Thyroid gland (tissue), 4 donors: ENCODE measurements at regions of chr1 and their contacts with region 1.

Region 1: DNA sequence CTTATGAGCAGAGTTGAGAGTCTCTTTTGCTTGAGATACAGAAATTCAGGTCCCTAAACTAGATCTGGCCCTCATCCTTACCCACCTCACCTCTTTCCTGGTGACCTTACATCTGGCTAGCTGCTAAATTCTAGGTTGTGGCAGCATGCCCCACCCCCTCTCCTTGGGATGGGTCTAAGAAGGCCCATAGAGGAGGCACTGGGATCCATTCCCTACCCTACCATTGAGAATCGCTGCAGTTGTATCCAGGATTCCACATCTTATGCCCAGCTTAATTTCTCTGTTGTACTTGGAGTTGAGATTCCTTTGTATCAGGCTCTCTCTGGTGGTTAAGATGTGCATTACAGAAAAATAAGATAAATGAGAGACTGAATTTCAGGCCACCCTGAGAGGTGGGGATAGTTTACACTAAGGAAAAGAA is 9.5 kb upstream of the TMEM39B start:
- DNase-seq: peak in 1 of 2 donors; percentile 20
- H3K4me3 ChIP-seq: no peak overlapping the region
- H3K27ac ChIP-seq: peak overlapping the region; percentile 34 to 77 (median 53)
- H3K4me1 ChIP-seq: peaks cover 19 to 37% of the 10 kb centered on the region in 2 donors
- H3K27me3 ChIP-seq: no peaks in the 10 kb centered on the region
- CTCF ChIP-seq: peak; percentile 26 to 87 (median 63)
- POLR2A ChIP-seq: no peak

Region 2: GRCh38 chr1:31938174-31938950 is 124.9 kb before region 1 on chr1 and contains the start of gene PTP4A2:
- intact Hi-C with region 1: no loop called
- DNase-seq: peak; percentile 98
- H3K4me3 ChIP-seq: peak within 1 kb of the TSS; percentile 65 to 73 (median 67)
- H3K27ac ChIP-seq: peak within 1 kb of the TSS; percentile 96 to 98 (median 96)
- H3K4me1 ChIP-seq: peaks cover 60 to 66% of the 10 kb centered on the region in 2 donors
- H3K27me3 ChIP-seq: no peaks in the 10 kb centered on the region
- CTCF ChIP-seq: peak in 3 of 6 experiments; percentile 81 to 85 (median 84)
- POLR2A ChIP-seq: peak; percentile 96 to 99
- total RNA-seq, gene PTP4A2: 204 to 507 (median 328) TPM

Region 3: DNA sequence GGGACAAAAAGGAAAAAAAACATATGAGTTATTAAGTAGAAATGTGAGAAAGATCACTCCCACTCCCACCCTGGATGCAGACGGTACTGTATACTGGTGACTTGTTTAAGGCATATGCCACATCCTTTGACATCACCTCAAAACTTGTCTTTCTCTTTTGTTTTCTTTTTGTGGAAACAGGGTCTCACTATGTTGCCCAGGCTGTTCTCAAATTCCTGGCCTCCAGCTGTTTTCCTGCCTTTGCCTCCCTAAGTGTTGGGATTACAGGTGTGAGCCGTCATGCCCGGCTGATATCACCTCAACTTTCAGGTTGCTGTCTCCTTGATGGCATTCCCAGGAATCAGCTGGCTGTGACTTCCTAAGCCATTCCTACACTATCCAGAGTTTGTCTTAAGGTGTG is 68.0 kb before region 1 on chr1:
- intact Hi-C with region 1: no loop called
- DNase-seq: peak; percentile 19 to 56
- H3K4me3 ChIP-seq: no peak overlapping the region
- H3K27ac ChIP-seq: peak overlapping the region in 1 of 3 donors; percentile 33
- H3K4me1 ChIP-seq: peaks cover 16 to 20% of the 10 kb centered on the region in 2 donors
- H3K27me3 ChIP-seq: no peaks in the 10 kb centered on the region
- CTCF ChIP-seq: no peak
- POLR2A ChIP-seq: no peak

Region 4: GRCh38 chr1:32005522-32005921 is 57.7 kb before region 1 on chr1:
- intact Hi-C with region 1: loop called (anchors 5 kb)
- DNase-seq: no peak
- H3K4me3 ChIP-seq: no peak overlapping the region
- H3K27ac ChIP-seq: no peak overlapping the region
- H3K4me1 ChIP-seq: peaks cover 0 to 5% of the 10 kb centered on the region in 2 donors
- H3K27me3 ChIP-seq: no peaks in the 10 kb centered on the region
- CTCF ChIP-seq: no peak
- POLR2A ChIP-seq: no peak

Region 5: DNA sequence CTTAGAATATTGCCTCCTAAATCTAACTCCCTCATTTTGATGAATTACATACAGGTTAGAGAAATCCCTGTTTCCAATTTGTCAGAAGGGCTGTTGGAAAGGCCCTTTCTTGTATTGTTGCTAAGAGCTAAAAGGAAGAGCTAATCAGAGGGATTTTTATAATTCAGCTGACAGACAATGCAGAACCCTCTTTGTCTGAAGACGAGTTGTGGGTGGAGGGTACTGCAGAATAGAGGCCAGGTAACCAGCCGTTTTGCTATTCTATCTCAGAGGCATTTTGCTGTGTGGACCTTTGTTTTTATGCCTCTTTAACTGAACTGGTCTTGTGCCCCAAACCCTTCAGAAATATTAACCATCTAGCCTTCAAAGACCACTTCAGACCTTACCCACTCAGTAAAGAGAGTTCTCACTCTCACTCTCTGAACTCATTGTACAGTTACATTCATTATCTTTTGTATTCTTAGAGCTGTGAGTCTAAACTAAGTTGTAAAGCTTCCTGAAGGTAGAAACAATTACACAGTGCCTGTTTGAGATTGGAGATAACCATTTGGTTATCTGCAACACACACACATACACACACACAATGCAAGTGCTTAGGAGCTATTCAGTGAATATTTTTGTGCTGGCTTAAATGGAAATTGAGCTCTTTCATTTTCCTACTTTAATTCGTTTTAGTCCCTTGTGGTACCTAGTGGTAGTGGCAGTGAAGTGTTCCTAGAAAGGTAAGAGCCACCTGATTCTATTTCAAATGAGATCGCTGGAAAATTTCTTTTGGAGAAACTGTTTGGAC is 64.3 kb after region 1 on chr1:
- intact Hi-C with region 1: no loop called
- DNase-seq: no peak
- H3K4me3 ChIP-seq: no peak overlapping the region
- H3K27ac ChIP-seq: no peak overlapping the region
- H3K4me1 ChIP-seq: peaks cover 0 to 4% of the 10 kb centered on the region in 2 donors
- H3K27me3 ChIP-seq: no peaks in the 10 kb centered on the region
- CTCF ChIP-seq: peak in 3 of 6 experiments; percentile 20 to 28 (median 28)
- POLR2A ChIP-seq: no peak